H1 (cell line): ENCODE measurements at regions of chr16 and their contacts with region 1.

Region 1: GRCh38 chr16:31179747-31180459 is at the start of gene FUS:
- DNase-seq: peak in 1 of 2 experiments; percentile 94
- H3K4me3 ChIP-seq: peak within 1 kb of the TSS; percentile 69 to 96 (median 86)
- H3K27ac ChIP-seq: peak within 1 kb of the TSS; percentile 99
- H3K4me1 ChIP-seq: peaks cover 0 to 7% (median 2%) of the 10 kb centered on the region in 4 experiments; a peak in 5 of 7 replicates
- H3K27me3 ChIP-seq: no peaks in the 10 kb centered on the region
- CTCF ChIP-seq: no peak
- EP300 ChIP-seq: peak in 1 of 2 experiments; percentile 99; a peak in 2 of 3 replicates
- POLR2A ChIP-seq: peak; percentile 100
- RAD21 ChIP-seq: no peak
- total RNA-seq, gene FUS: 685 and 686 TPM in 2 replicates

Region 2: GRCh38 chr16:30984669-30985400 is 195.1 kb before region 1 on chr16 and contains the start of gene HSD3B7:
- CTCF ChIA-PET with region 1: no interaction called
- POLR2A ChIA-PET with region 1: interaction called, 11 read pairs
- DNase-seq: peak; percentile 74 to 100
- H3K4me3 ChIP-seq: peak within 1 kb of the TSS in 3 of 4 experiments; percentile 20 to 50 (median 40); a peak in 5 of 8 replicates
- H3K27ac ChIP-seq: no peak within 1 kb of the TSS
- H3K4me1 ChIP-seq: peaks cover 0 to 5% (median 2%) of the 10 kb centered on the region in 4 experiments; a peak in 4 of 7 replicates
- H3K27me3 ChIP-seq: no peaks in the 10 kb centered on the region
- CTCF ChIP-seq: peak; percentile 88 to 96 (median 94)
- EP300 ChIP-seq: no peak
- POLR2A ChIP-seq: peak in 1 of 2 experiments; percentile 60; a peak in 2 of 3 replicates
- RAD21 ChIP-seq: peak; percentile 79 to 84
- total RNA-seq, gene HSD3B7: 2.9 and 3.1 TPM in 2 replicates

Region 3: DNA sequence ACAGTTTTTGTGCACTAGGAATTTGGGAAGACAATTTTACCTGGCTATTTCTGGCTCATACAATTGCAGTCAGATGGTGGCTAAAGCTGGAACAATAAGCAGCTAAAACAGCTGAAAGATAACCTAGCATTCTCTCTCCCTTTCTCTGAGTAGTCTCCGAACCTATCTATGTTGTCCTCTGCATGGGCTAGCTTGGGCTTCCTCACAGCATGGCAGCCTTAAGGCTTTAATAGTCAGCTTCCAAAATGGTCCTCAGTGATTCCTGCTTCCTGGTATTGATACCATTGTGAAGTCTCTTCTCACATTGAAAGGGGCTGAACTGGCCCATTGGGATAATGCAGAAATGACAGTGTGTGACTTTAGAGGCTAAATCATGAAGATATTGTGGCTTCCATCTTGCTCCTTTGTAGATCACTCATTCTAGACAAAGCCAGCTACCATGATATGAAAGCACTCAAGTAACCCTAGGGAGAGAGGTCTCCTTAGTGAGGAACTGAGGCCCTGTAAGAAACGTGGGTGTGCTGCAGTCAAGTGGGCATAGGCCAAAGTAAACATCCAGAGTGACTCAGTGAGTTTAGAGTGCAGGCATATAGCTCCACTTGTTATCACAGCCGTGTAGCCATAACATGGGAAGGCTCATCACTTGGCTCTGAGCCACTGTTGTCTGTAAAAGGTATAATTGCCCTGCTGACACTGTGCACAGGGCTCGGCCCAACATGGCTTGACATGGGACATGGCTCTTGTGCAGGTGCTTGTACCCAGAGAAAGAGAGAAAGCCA is 79.9 kb before region 1 on chr16:
- CTCF ChIA-PET with region 1: no interaction called
- POLR2A ChIA-PET with region 1: interaction called, 22 read pairs
- DNase-seq: no peak
- H3K4me3 ChIP-seq: no peak overlapping the region
- H3K27ac ChIP-seq: no peak overlapping the region
- H3K4me1 ChIP-seq: no peaks in the 10 kb centered on the region
- H3K27me3 ChIP-seq: 0 out of 7 replicates have a peak, but pooled peaks cover 0 to 2% (median 0%) of the 10 kb centered on the region in 4 experiments
- CTCF ChIP-seq: no peak
- EP300 ChIP-seq: no peak
- POLR2A ChIP-seq: no peak
- RAD21 ChIP-seq: no peak

Region 4: DNA sequence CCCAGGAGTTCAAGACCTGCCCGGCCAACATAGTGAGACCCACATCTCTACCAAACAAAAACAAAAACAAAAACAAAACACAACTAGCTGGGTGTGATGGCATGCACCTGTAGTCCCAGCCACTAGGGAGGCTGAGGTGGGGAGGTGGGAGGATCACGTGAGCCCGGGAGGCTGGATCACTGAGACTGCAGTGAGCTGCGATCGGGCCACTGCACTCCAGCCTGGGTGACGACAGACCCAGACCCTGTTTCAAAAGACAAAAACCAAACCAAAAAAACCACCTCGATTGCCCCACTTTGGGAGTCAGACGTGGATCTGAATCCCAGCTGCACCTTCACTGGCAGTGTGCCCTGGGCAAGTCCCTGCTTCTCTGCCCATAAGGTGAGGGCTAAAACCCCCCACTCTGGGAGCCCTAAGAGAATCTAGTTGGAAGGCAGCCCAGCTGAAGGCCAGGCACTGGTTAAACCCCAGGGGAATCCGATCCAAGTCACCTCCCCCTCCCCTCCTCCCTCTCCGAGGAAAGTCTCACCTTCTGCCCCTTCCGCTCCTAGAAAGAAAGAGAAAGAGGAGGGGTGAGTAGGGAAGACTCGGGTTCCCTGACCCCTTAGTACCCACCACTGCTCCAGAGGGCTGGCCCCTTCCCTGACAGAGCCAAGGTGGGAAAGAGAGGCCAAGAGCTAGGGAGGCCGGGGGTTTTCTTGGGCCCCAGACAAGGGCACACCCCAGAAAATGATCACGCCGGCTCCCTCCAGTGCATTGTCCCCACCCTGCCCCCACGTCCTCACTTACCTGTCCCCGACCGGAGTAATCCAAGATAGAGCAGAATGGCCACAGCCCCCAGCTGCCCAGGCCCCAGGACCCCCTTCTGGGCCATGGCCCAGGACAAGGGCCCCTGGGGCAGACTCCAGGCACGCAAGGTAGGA is 45.0 kb before region 1 on chr16:
- CTCF ChIA-PET with region 1: no interaction called
- POLR2A ChIA-PET with region 1: interaction called, 85 read pairs
- DNase-seq: peak in 1 of 2 experiments; percentile 66
- H3K4me3 ChIP-seq: peak overlapping the region; percentile 65 to 87 (median 81)
- H3K27ac ChIP-seq: peak overlapping the region; percentile 86; the same call in 1 of the 2 replicates
- H3K4me1 ChIP-seq: peaks cover 5 to 54% (median 44%) of the 10 kb centered on the region in 4 experiments
- H3K27me3 ChIP-seq: no peaks in the 10 kb centered on the region
- CTCF ChIP-seq: no peak
- EP300 ChIP-seq: no peak
- POLR2A ChIP-seq: peak in 1 of 2 experiments; percentile 60; a peak in 2 of 3 replicates
- RAD21 ChIP-seq: no peak

Region 5: GRCh38 chr16:31157136-31157535 is 22.8 kb before region 1 on chr16:
- CTCF ChIA-PET with region 1: interaction called, 8 read pairs
- POLR2A ChIA-PET with region 1: interaction called, 30 read pairs
- DNase-seq: no peak
- H3K4me3 ChIP-seq: no peak overlapping the region
- H3K27ac ChIP-seq: no peak overlapping the region
- H3K4me1 ChIP-seq: no peaks in the 10 kb centered on the region
- H3K27me3 ChIP-seq: no peaks in the 10 kb centered on the region
- CTCF ChIP-seq: no peak
- EP300 ChIP-seq: no peak
- POLR2A ChIP-seq: no peak
- RAD21 ChIP-seq: no peak

Region 6: DNA sequence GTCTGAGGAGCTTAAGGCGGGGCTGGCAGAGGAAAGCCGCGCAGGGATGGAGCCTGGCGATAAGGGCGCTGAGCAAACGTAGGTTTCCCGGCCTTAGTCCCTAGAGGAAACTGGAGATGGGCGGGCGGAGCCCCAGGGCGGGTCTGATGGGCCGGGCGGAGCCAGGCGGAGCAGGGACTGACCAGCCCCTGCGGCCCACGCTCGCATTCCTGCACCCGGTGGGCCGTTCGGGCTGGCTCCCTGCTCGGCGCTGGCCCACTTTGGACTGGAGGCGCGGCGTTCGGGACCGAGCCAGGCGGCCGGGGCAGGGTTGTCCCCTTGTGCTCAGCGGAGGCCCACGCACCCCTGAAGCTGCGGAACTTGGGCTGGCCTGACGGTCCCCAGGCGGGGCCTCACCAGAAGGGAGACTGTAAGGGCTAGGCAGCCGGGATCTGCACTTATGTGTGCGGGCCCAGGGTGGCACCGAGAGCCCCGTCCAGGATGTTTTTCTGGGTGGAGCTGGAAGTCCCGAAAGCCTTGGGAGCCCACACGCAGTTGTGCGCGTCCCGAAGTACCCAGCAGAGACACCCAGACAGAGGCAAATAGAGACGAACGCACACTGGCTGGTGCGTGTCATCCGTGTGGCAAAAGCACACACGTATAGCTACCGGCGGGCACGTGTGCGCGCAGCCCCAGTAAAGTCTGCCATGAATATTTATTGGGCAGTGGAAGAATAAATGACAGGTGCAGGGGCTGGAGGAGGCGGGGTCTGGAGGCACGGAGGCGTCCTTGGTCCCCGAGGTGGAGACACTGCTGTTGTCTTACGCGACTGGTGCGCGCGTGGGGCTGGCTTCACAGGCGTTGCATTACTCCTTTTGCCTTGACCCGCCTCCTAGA is 35.6 kb after region 1 on chr16:
- CTCF ChIA-PET with region 1: no interaction called
- POLR2A ChIA-PET with region 1: interaction called, 28 read pairs
- DNase-seq: peak; percentile 73 to 86
- H3K4me3 ChIP-seq: peak overlapping the region; percentile 30 to 74 (median 59)
- H3K27ac ChIP-seq: no peak overlapping the region
- H3K4me1 ChIP-seq: peaks cover 0 to 33% (median 20%) of the 10 kb centered on the region in 4 experiments; a peak in 6 of 7 replicates
- H3K27me3 ChIP-seq: peaks cover 8 to 21% (median 19%) of the 10 kb centered on the region in 4 experiments
- CTCF ChIP-seq: 0 out of 4 replicates have a peak, but pooled peaks of 1 of the 3 experiments have one; percentile 5
- EP300 ChIP-seq: no peak
- POLR2A ChIP-seq: no peak
- RAD21 ChIP-seq: no peak; a peak in 1 of 4 replicates